ENCODE measurements at regions of chr4 and their contacts with region 1.

Region 1: GRCh38 chr4:175536852-175537453 is 275.1 kb downstream of the GPM6A start:
- DNase-seq: peak; percentile 72
- H3K4me3 Mint-ChIP-seq: no peak overlapping the region
- H3K27ac Mint-ChIP-seq: no peak overlapping the region
- H3K4me1 Mint-ChIP-seq: peaks cover 6% of the 10 kb centered on the region
- H3K27me3 Mint-ChIP-seq: no peaks in the 10 kb centered on the region
- CTCF ChIP-seq: peak; percentile 63

Region 2: GRCh38 chr4:174631901-174632758 is 904.8 kb before region 1 on chr4:
- CTCF ChIA-PET with region 1: no interaction called
- POLR2A ChIA-PET with region 1: no interaction called
- intact Hi-C with region 1: loop called (anchors 10 kb)
- DNase-seq: peak; percentile 71
- H3K4me3 Mint-ChIP-seq: no peak overlapping the region
- H3K27ac Mint-ChIP-seq: no peak overlapping the region
- H3K4me1 Mint-ChIP-seq: no peaks in the 10 kb centered on the region
- H3K27me3 Mint-ChIP-seq: no peaks in the 10 kb centered on the region
- CTCF ChIP-seq: peak; percentile 62

Region 3: DNA sequence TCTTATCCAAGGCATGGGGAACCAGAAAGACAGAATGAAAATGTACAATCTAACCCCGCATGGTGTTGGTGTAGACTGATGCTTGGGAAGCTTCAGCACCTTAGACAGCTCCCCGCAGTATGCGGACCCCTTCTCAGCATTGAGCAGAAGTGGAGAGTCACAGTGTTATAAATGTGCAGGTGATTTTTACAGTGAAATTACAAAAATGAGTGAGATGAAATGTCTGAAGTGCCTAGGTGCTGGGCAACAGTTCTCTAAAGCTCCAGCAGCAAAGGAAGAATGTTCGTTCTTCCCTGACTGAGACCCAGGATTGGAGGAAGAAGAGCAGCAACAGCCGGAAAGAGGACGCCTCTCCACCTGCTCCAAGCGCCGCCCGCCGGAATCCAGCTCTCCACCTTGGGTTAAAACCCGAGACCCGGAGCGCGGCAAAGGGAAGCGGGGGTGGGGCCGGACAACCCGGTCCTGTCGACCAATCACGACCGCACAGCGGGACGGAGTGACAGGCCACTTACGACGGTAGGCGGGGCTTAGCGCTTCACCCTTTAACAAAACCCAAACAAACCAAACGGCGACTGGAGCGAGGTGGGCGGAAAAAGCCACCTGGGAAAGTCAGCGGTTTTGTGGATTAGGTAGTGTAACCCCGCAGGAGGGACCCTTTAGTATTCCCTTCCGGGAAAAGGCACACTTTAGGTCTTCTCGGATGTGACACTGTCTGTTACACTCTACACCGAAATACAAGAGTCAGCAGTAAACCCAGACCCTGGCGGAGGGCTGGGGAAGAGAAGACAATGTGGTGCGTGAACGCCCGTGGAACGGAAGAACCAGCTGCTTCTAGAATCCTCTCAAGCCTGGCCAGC is 707.9 kb before region 1 on chr4 and contains the start of gene GLRA3:
- CTCF ChIA-PET with region 1: no interaction called
- POLR2A ChIA-PET with region 1: no interaction called
- intact Hi-C with region 1: loop called (anchors 5 kb)
- DNase-seq: peak; percentile 65
- H3K4me3 Mint-ChIP-seq: peak within 1 kb of the TSS; percentile 78
- H3K27ac Mint-ChIP-seq: no peak within 1 kb of the TSS
- H3K4me1 Mint-ChIP-seq: peaks cover 7% of the 10 kb centered on the region
- H3K27me3 Mint-ChIP-seq: no peaks in the 10 kb centered on the region
- CTCF ChIP-seq: no peak
- total RNA-seq, gene GLRA3: not detected in 2 replicates

Region 4: GRCh38 chr4:175127314-175127713 is 409.6 kb before region 1 on chr4:
- CTCF ChIA-PET with region 1: no interaction called
- POLR2A ChIA-PET with region 1: no interaction called
- intact Hi-C with region 1: loop called (anchors 10 kb)
- DNase-seq: peak; percentile 86
- H3K4me3 Mint-ChIP-seq: no peak overlapping the region
- H3K27ac Mint-ChIP-seq: no peak overlapping the region
- H3K4me1 Mint-ChIP-seq: peaks cover 13% of the 10 kb centered on the region
- H3K27me3 Mint-ChIP-seq: no peaks in the 10 kb centered on the region
- CTCF ChIP-seq: no peak

Region 5: DNA sequence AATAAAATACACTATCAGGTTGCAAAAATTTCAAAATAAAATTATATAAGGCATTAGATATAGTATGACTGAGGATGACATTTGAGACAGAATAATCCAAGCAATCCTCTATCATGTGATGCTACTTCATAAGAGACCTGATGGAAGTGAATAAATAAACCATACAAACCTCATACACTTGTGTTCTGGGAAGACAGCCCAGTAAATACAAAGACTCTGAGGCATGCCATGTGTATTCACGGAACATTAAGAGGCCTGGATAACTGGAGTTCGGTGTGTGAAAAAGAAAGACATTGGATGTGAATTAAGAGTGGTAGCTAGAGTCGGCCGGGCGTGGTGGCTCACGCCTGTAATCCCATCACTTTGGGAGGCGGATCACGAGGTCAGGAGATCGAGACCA is 254.5 kb before region 1 on chr4:
- CTCF ChIA-PET with region 1: no interaction called
- POLR2A ChIA-PET with region 1: no interaction called
- intact Hi-C with region 1: loop called (anchors 10 kb)
- DNase-seq: no peak
- H3K4me3 Mint-ChIP-seq: no peak overlapping the region
- H3K27ac Mint-ChIP-seq: no peak overlapping the region
- H3K4me1 Mint-ChIP-seq: no peaks in the 10 kb centered on the region
- H3K27me3 Mint-ChIP-seq: no peaks in the 10 kb centered on the region
- CTCF ChIP-seq: no peak

Measured in MCF 10A (cell line).